Activated CD4-positive, alpha-beta T cell treated with anti-CD3 and anti-CD28 coated beads for 36 hours (primary cell): ENCODE measurements at regions of chr9 and their contacts with region 1.

Region 1: DNA sequence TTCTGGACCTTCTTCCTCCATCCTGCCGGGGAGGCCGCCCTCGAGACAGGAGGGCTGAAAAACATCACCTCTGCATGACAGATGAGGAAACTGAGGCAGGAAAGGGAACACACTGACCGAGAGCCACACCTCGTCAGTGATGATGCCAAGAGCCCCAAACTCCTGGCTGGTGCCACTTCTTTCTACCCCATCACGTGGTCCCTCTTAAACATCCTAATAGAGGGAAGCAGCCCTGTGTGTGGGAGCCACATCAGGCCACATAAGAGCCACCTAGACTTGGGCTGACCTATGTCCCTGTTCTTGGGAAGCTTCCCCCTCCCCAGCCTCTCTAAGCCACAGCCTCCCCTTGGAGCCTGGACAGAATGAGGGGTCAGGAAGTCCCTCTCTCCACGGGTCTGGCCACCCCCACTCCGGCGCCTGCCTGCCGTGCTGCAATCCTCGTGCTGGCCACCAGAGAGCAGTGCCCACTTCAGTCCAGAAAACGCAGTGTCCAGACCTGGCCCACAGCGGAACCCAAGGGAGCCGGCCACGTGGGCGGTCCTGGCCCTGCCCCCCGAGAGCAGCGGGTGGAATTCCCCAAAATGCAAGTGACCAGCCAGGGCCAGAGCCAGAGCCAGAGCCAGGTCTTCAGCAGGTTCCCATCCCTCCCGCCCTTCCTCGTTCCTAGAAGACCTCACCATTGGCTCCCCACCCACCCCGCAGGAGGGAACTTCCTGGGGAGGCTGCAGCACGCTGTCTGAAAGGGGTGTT is 54.7 kb upstream of the SARDH start:
- DNase-seq: peak; percentile 70
- ATAC-seq: peak; percentile 75
- H3K4me3 Mint-ChIP-seq: no peak overlapping the region
- H3K27ac Mint-ChIP-seq: no peak overlapping the region
- H3K4me1 Mint-ChIP-seq: peaks cover 3% of the 10 kb centered on the region
- H3K27me3 Mint-ChIP-seq: peaks cover 1% of the 10 kb centered on the region

Region 2: GRCh38 chr9:133182211-133182610 is 610.7 kb before region 1 on chr9:
- CTCF ChIA-PET with region 1: no interaction called
- POLR2A ChIA-PET with region 1: no interaction called
- intact Hi-C with region 1: no loop called
- DNase-seq: no peak
- ATAC-seq: no peak
- H3K4me3 Mint-ChIP-seq: no peak overlapping the region
- H3K27ac Mint-ChIP-seq: no peak overlapping the region
- H3K4me1 Mint-ChIP-seq: peaks cover 23% of the 10 kb centered on the region
- H3K27me3 Mint-ChIP-seq: peaks cover 12% of the 10 kb centered on the region

Region 3: DNA sequence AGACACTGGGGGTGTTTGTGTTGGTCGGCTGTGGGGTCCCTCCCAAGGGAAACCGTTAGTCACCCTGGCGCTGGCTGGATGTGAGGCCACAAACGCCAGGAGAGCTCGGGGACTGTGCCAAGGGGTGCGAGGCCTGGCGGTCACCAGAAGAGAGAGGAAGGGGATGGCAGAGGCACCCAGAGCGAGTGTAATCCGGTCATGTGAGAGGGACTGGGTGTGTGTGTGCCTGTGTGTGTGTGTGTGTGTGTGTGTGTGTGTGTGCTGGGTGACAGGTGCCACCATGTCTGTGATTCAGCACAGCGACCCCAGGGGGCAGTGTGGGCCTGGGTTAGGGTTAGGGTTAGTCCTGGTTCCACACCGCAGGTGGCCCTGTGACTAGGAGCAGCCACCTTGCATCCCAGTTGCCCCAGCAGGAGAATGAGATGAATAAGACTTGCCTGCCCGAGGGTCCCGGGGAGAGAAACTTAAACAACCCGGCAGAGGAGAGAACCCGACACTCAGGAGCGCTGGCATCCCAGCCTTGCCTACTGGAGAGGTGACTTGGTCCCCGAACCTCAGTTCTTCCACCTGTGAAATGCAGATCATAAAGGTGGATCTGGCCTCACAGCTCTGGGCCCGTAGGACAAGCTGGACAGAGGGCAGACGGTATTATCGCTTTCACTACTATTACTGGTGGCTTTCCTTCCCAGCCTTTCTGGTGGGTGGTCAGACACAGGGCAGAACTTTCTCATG is 259.8 kb before region 1 on chr9:
- CTCF ChIA-PET with region 1: no interaction called
- POLR2A ChIA-PET with region 1: no interaction called
- intact Hi-C with region 1: no loop called
- DNase-seq: peak; percentile 89
- ATAC-seq: peak; percentile 82
- H3K4me3 Mint-ChIP-seq: peak overlapping the region; percentile 16
- H3K27ac Mint-ChIP-seq: no peak overlapping the region
- H3K4me1 Mint-ChIP-seq: peaks cover 15% of the 10 kb centered on the region
- H3K27me3 Mint-ChIP-seq: peaks cover 4% of the 10 kb centered on the region

Region 4: GRCh38 chr9:133813749-133814585 is 21.1 kb after region 1 on chr9:
- CTCF ChIA-PET with region 1: no interaction called
- POLR2A ChIA-PET with region 1: no interaction called
- intact Hi-C with region 1: no loop called
- DNase-seq: no peak
- ATAC-seq: no peak
- H3K4me3 Mint-ChIP-seq: no peak overlapping the region
- H3K27ac Mint-ChIP-seq: no peak overlapping the region
- H3K4me1 Mint-ChIP-seq: no peaks in the 10 kb centered on the region
- H3K27me3 Mint-ChIP-seq: no peaks in the 10 kb centered on the region

Region 5: GRCh38 chr9:134099123-134099787 is 306.4 kb after region 1 on chr9:
- CTCF ChIA-PET with region 1: no interaction called
- POLR2A ChIA-PET with region 1: no interaction called
- intact Hi-C with region 1: loop called in 1 of 2 experiments (anchors 1 kb)
- DNase-seq: peak; percentile 75
- ATAC-seq: peak; percentile 86
- H3K4me3 Mint-ChIP-seq: no peak overlapping the region
- H3K27ac Mint-ChIP-seq: no peak overlapping the region
- H3K4me1 Mint-ChIP-seq: no peaks in the 10 kb centered on the region
- H3K27me3 Mint-ChIP-seq: peaks cover 17% of the 10 kb centered on the region